ENCODE measurements at regions of chr21 and their contacts with region 1.

Region 1: GRCh38 chr21:45140346-45140940 is 66.1 kb downstream of the ADARB1 start:
- H3K4me3 ChIP-seq: no peak overlapping the region
- H3K27ac ChIP-seq: no peak overlapping the region
- H3K4me1 ChIP-seq: no peaks in the 10 kb centered on the region
- CTCF ChIP-seq: peak; percentile 98

Region 2: GRCh38 chr21:44927587-44928461 is 212.6 kb before region 1 on chr21:
- CTCF ChIA-PET with region 1: interaction called, 19 read pairs
- POLR2A ChIA-PET with region 1: no interaction called
- H3K4me3 ChIP-seq: no peak overlapping the region
- H3K27ac ChIP-seq: no peak overlapping the region
- H3K4me1 ChIP-seq: 0 out of 2 replicates have a peak, but pooled peaks cover 5% of the 10 kb centered on the region
- CTCF ChIP-seq: no peak

Region 3: GRCh38 chr21:45004481-45005263 is 135.8 kb before region 1 on chr21:
- CTCF ChIA-PET with region 1: interaction called, 15 read pairs
- POLR2A ChIA-PET with region 1: no interaction called
- H3K4me3 ChIP-seq: no peak overlapping the region
- H3K27ac ChIP-seq: no peak overlapping the region
- H3K4me1 ChIP-seq: no peaks in the 10 kb centered on the region
- CTCF ChIP-seq: no peak

Region 4: GRCh38 chr21:45098867-45099266 is 41.6 kb before region 1 on chr21:
- CTCF ChIA-PET with region 1: interaction called, 70 read pairs
- POLR2A ChIA-PET with region 1: no interaction called
- H3K4me3 ChIP-seq: no peak overlapping the region
- H3K27ac ChIP-seq: no peak overlapping the region
- H3K4me1 ChIP-seq: 0 out of 2 replicates have a peak, but pooled peaks cover under 1% of the 10 kb centered on the region
- CTCF ChIP-seq: peak; percentile 49; the same call in 1 of the 2 replicates

Region 5: GRCh38 chr21:45152265-45152746 is 11.9 kb after region 1 on chr21:
- CTCF ChIA-PET with region 1: interaction called, 97 read pairs
- POLR2A ChIA-PET with region 1: interaction called, 4 read pairs
- H3K4me3 ChIP-seq: no peak overlapping the region
- H3K27ac ChIP-seq: no peak overlapping the region
- H3K4me1 ChIP-seq: no peaks in the 10 kb centered on the region
- CTCF ChIP-seq: no peak

Region 6: DNA sequence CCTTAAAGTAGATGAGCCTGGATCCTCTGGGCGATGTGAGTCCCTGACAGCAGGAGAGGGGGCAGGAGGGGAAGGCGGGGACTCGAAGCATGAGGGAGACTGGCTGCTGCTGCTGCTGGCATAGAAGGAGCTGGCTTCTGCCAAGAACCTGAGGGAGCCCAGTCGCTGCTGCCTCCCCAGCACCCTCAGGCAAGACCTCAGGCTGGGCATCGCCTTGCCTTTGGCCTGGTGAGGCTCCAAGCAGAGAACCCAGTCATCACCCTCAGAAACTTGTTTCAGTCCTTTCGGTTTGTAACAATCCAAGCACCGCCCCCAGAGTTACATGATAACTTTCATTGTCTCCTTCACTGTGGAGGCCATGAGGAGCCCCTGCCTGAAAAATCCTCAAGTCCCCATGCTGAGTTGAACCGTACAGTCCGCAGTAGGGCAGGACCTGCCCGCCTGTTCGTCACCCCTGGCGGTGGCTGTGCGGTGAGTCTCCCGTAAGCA is 108.5 kb after region 1 on chr21:
- CTCF ChIA-PET with region 1: interaction called, 11 read pairs
- POLR2A ChIA-PET with region 1: no interaction called
- H3K4me3 ChIP-seq: no peak overlapping the region
- H3K27ac ChIP-seq: no peak overlapping the region
- H3K4me1 ChIP-seq: no peaks in the 10 kb centered on the region
- CTCF ChIP-seq: no peak

Region 7: GRCh38 chr21:45357436-45358260 is 217.2 kb after region 1 on chr21:
- CTCF ChIA-PET with region 1: no interaction called
- POLR2A ChIA-PET with region 1: no interaction called
- H3K4me3 ChIP-seq: no peak overlapping the region
- H3K27ac ChIP-seq: no peak overlapping the region
- H3K4me1 ChIP-seq: no peaks in the 10 kb centered on the region
- CTCF ChIP-seq: no peak

Region 8: DNA sequence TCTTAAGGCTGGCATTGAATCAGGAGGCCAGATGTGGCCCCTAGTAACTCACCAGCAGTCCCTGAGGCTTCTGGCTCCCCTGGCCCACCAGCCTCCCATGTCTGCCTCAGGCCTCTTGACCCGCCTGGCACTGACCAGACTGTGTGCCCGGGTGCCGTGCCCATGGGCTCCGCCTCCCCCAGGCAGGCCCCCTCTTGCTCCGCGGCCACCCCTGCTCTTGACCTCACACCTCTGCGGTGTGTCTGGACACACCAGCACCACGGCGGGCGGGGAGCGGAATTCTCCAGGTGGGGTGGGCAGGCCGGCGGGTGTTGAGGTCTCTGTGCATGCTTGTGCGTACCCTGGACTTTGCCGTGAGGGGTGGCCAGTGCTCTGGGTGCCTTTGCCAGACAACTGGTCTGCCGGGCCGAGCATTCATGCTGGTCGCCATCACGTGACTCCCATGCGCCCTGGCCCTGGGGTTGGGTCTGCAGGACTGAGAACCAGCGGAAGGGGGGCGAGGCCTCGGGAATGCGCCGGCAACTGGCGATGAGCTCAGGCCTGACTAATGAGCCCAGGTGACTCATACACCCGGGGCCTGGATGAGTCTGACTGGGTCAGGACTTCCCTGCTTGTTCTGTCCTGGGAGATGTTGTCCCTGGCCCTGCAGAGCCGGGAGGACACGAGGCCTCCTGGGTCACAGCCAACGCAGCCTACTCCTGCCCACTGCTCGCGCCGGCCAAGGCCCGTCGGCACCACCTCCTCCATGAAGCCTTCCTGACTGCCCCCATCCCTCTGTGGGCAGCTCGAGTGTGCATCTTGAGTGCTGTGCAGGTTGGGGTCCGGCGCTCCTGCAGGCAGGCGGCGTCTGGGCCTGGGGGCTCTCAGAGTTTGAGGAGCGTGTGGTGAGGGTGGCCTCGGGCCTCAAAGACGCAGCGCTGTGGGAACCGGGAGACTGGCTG is 287.2 kb after region 1 on chr21:
- CTCF ChIA-PET with region 1: interaction called, 11 read pairs
- POLR2A ChIA-PET with region 1: no interaction called
- H3K4me3 ChIP-seq: no peak overlapping the region
- H3K27ac ChIP-seq: no peak overlapping the region
- H3K4me1 ChIP-seq: 0 out of 2 replicates have a peak, but pooled peaks cover 2% of the 10 kb centered on the region
- CTCF ChIP-seq: no peak